Colonic mucosa (tissue), 4 donors: ENCODE measurements at regions of chr6 and their contacts with region 1.

Region 1: GRCh38 chr6:79672631-79673111 is 41.5 kb downstream of the SH3BGRL2 start:
- DNase-seq: no peak
- H3K4me3 ChIP-seq: no peak overlapping the region
- H3K27ac ChIP-seq: peak overlapping the region; percentile 77
- H3K4me1 ChIP-seq: no peaks in the 10 kb centered on the region
- H3K27me3 ChIP-seq: no peaks in the 10 kb centered on the region
- CTCF ChIP-seq: peak; percentile 29

Region 2: GRCh38 chr6:79570129-79571029 is 102.3 kb before region 1 on chr6:
- intact Hi-C with region 1: loop called (anchors 5 kb)
- DNase-seq: peak; percentile 78
- H3K4me3 ChIP-seq: no peak overlapping the region
- H3K27ac ChIP-seq: peak overlapping the region; percentile 42
- H3K4me1 ChIP-seq: no peaks in the 10 kb centered on the region
- H3K27me3 ChIP-seq: no peaks in the 10 kb centered on the region
- CTCF ChIP-seq: peak; percentile 58

Region 3: DNA sequence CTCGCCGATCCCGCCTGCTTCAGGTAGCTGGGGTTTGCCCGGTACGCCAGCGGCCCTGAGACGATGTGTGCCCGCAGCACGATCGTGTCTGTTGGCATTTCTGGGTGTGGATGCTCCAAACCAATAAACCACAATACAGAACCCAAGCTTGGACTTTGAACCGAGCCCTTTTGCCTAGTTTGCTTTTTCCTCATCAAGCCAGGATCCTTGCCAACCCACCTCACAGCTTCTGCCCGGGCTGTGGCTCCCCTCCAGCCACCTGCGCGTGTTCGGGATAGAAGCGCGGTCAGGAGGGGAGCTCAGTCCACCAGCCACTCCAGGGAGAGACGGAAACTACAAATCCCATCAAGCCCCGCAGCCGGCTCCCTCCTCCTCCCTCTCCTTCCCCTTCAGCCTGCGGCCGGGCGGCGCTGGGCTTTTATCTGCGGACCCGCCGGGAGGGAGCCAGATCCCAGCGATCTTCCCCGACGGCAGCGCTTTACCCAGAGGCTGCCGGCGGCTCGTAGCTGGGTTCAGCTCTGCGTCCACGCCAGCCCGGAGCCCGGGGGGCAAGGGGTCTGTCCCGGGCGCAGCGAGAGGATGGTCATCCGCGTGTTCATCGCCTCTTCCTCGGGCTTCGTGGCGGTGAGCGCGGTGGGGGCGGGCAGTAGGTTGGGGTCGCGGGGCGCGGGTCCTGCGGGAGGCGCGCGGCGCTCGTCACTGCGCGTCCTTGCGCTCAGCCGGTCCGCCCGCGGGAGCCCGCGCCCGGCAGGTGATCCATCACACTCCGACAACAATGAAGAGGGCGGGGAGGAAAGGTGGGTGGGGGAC is 41.6 kb before region 1 on chr6 and contains the start of gene SH3BGRL2:
- intact Hi-C with region 1: loop called (anchors 5 kb)
- DNase-seq: peak; percentile 95
- H3K4me3 ChIP-seq: peak within 1 kb of the TSS; percentile 57
- H3K27ac ChIP-seq: peak within 1 kb of the TSS; percentile 98
- H3K4me1 ChIP-seq: no peaks in the 10 kb centered on the region
- H3K27me3 ChIP-seq: no peaks in the 10 kb centered on the region
- CTCF ChIP-seq: no peak
- total RNA-seq, gene SH3BGRL2: 95.4 to 145 TPM

Region 4: GRCh38 chr6:80335121-80335531 is 662.5 kb after region 1 on chr6:
- intact Hi-C with region 1: no loop called
- DNase-seq: no peak
- H3K4me3 ChIP-seq: no peak overlapping the region
- H3K27ac ChIP-seq: no peak overlapping the region
- H3K4me1 ChIP-seq: no peaks in the 10 kb centered on the region
- H3K27me3 ChIP-seq: no peaks in the 10 kb centered on the region
- CTCF ChIP-seq: no peak